ENCODE measurements at regions of chr10 and their contacts with region 1.

Region 1: GRCh38 chr10:70619271-70620019 is 16.9 kb upstream of the PRF1 start:
- DNase-seq: peak; percentile 83 to 88 (median 84)
- ATAC-seq: peak; percentile 83
- H3K4me3 ChIP-seq: no peak overlapping the region
- H3K27ac ChIP-seq: no peak overlapping the region; the same call in 2 of the 3 replicates
- H3K4me1 ChIP-seq: peaks cover 7 to 27% of the 10 kb centered on the region in 2 experiments
- H3K27me3 ChIP-seq: no peaks in the 10 kb centered on the region
- CTCF ChIP-seq: peak; percentile 69 to 91 (median 79)
- EP300 ChIP-seq: peak; percentile 60
- POLR2A ChIP-seq: no peak
- RAD21 ChIP-seq: peak; percentile 91 to 99

Region 2: GRCh38 chr10:69628891-69629290 is 990.6 kb before region 1 on chr10:
- CTCF ChIA-PET with region 1: no interaction called
- POLR2A ChIA-PET with region 1: no interaction called
- in situ Hi-C with region 1: no loop called
- intact Hi-C with region 1: no loop called
- DNase-seq: peak in 2 of 4 experiments; percentile 1 to 3
- ATAC-seq: no peak
- H3K4me3 ChIP-seq: no peak overlapping the region
- H3K27ac ChIP-seq: no peak overlapping the region
- H3K4me1 ChIP-seq: peaks cover 4 to 12% of the 10 kb centered on the region in 2 experiments; a peak in 3 of 5 replicates
- H3K27me3 ChIP-seq: no peaks in the 10 kb centered on the region; a peak in 1 of 5 replicates
- CTCF ChIP-seq: no peak
- EP300 ChIP-seq: no peak
- POLR2A ChIP-seq: no peak
- RAD21 ChIP-seq: no peak

Region 3: GRCh38 chr10:70461215-70461986 is 158.0 kb before region 1 on chr10:
- CTCF ChIA-PET with region 1: no interaction called
- POLR2A ChIA-PET with region 1: no interaction called
- in situ Hi-C with region 1: no loop called
- intact Hi-C with region 1: loop called (anchors 5 kb)
- DNase-seq: peak; percentile 81 to 86 (median 83)
- ATAC-seq: peak; percentile 90
- H3K4me3 ChIP-seq: no peak overlapping the region
- H3K27ac ChIP-seq: no peak overlapping the region
- H3K4me1 ChIP-seq: peaks cover 5 to 15% of the 10 kb centered on the region in 2 experiments; a peak in 3 of 5 replicates
- H3K27me3 ChIP-seq: peaks cover 49 to 73% of the 10 kb centered on the region in 2 experiments
- CTCF ChIP-seq: peak; percentile 92 to 95 (median 94)
- EP300 ChIP-seq: no peak
- POLR2A ChIP-seq: no peak
- RAD21 ChIP-seq: peak; percentile 84 to 95

Region 4: GRCh38 chr10:70558871-70559810 is 60.3 kb before region 1 on chr10:
- CTCF ChIA-PET with region 1: no interaction called
- POLR2A ChIA-PET with region 1: interaction called, 6 read pairs
- in situ Hi-C with region 1: no loop called
- intact Hi-C with region 1: loop called (anchors 2 kb)
- DNase-seq: peak; percentile 91 to 94 (median 93)
- ATAC-seq: peak; percentile 94
- H3K4me3 ChIP-seq: peak overlapping the region; percentile 31
- H3K27ac ChIP-seq: peak overlapping the region; percentile 76
- H3K4me1 ChIP-seq: peaks cover 25 to 54% of the 10 kb centered on the region in 2 experiments
- H3K27me3 ChIP-seq: no peaks in the 10 kb centered on the region
- CTCF ChIP-seq: peak; percentile 82 to 93 (median 88)
- EP300 ChIP-seq: peak; percentile 89
- POLR2A ChIP-seq: no peak
- RAD21 ChIP-seq: peak; percentile 83 to 87

Region 5: GRCh38 chr10:70666960-70667798 is 47.7 kb after region 1 on chr10:
- CTCF ChIA-PET with region 1: interaction called, 6 read pairs
- POLR2A ChIA-PET with region 1: interaction called, 4 read pairs
- in situ Hi-C with region 1: no loop called
- intact Hi-C with region 1: loop called (anchors 2 kb)
- DNase-seq: peak; percentile 90 to 98 (median 94)
- ATAC-seq: peak; percentile 65
- H3K4me3 ChIP-seq: no peak overlapping the region
- H3K27ac ChIP-seq: peak overlapping the region; percentile 82
- H3K4me1 ChIP-seq: peaks cover 72 to 91% of the 10 kb centered on the region in 2 experiments
- H3K27me3 ChIP-seq: no peaks in the 10 kb centered on the region
- CTCF ChIP-seq: no peak
- EP300 ChIP-seq: peak; percentile 100
- POLR2A ChIP-seq: peak; percentile 76
- RAD21 ChIP-seq: peak in 1 of 2 experiments; percentile 26; a peak in 2 of 4 replicates

Region 6: DNA sequence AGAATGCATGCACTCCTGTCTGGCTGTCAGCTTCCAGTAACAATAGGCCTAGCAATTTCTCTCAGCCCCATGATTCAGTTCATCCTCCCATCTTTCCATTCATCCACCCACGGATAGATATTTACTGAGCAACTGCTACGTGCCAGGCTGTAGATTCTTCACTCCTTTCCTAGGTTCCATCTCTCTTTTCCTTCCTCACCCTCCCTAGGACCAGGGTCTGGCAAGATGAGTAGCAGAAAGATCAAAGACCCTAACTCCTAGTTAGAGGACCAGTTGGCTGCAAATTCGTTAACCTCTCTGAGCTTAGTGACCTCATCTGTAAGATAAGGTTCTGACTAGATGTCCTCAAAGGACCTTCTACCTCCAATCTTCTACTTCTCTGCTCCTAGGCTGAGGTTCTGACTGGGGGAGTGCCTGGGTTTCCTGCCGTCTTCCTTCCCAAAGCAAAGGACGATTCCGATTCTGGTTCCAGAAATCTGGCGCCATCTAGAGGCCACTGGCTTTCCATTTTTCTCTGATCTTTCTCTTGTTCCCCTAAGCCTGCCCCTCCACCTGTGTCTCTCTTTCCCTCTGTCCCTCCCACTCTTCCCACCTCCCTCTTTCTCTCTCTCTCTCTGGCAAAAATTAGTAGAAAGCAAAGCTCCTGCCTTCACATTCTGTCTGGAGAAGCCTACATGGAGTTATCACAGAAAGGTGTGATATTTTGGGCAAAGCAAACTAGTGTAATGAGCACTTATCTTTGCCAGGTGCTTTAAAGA is 139.5 kb after region 1 on chr10:
- CTCF ChIA-PET with region 1: interaction called, 3 read pairs
- POLR2A ChIA-PET with region 1: interaction called, 4 read pairs
- in situ Hi-C with region 1: no loop called
- intact Hi-C with region 1: loop called (anchors 1 kb)
- DNase-seq: peak; percentile 78 to 89 (median 84)
- ATAC-seq: peak; percentile 78
- H3K4me3 ChIP-seq: no peak overlapping the region
- H3K27ac ChIP-seq: no peak overlapping the region
- H3K4me1 ChIP-seq: peaks cover 25 to 28% of the 10 kb centered on the region in 2 experiments
- H3K27me3 ChIP-seq: no peaks in the 10 kb centered on the region
- CTCF ChIP-seq: peak; percentile 80 to 91 (median 83)
- EP300 ChIP-seq: peak; percentile 30; the same call in 1 of the 2 replicates
- POLR2A ChIP-seq: no peak
- RAD21 ChIP-seq: peak; percentile 60 to 86

Region 7: GRCh38 chr10:70880077-70880534 is 260.7 kb after region 1 on chr10:
- CTCF ChIA-PET with region 1: no interaction called
- POLR2A ChIA-PET with region 1: interaction called, 3 read pairs
- in situ Hi-C with region 1: no loop called
- intact Hi-C with region 1: loop called (anchors 1 kb)
- DNase-seq: peak; percentile 74 to 87 (median 78)
- ATAC-seq: peak; percentile 96
- H3K4me3 ChIP-seq: no peak overlapping the region
- H3K27ac ChIP-seq: no peak overlapping the region
- H3K4me1 ChIP-seq: no peaks in the 10 kb centered on the region; a peak in 1 of 5 replicates
- H3K27me3 ChIP-seq: no peaks in the 10 kb centered on the region
- CTCF ChIP-seq: peak; percentile 91 to 95 (median 95)
- EP300 ChIP-seq: no peak
- POLR2A ChIP-seq: no peak
- RAD21 ChIP-seq: peak; percentile 99